Activated CD4-positive, alpha-beta T cell treated with anti-CD3 and anti-CD28 coated beads for 36 hours (primary cell): ENCODE measurements at regions of chr20 and their contacts with region 1.

Region 1: GRCh38 chr20:32387252-32387651 is 29.1 kb downstream of the ASXL1 start:
- DNase-seq: peak; percentile 42
- ATAC-seq: peak; percentile 98
- H3K4me3 Mint-ChIP-seq: no peak overlapping the region
- H3K27ac Mint-ChIP-seq: peak overlapping the region; percentile 67
- H3K4me1 Mint-ChIP-seq: peaks cover 63% of the 10 kb centered on the region
- H3K27me3 Mint-ChIP-seq: no peaks in the 10 kb centered on the region

Region 2: DNA sequence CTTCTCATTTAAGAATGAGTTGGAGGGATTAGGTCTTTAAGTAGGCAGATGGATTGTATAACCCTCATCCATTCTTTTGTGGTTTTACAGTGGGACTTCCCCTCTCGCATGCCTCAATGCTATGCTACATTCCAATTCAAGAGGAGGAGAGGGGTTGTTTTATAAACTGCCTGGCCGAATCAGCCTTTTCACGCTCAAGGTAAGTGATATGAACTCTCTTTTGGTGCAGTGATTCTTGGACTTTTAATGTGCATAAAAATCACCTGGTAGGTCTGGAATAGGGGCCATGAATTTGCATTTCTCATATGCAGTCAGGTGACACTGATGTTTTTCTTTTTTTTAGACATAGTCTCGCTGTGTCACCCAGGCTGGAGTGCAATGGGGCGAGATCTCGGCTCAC is 18.3 kb before region 1 on chr20:
- CTCF ChIA-PET with region 1: interaction called, 4 read pairs
- POLR2A ChIA-PET with region 1: interaction called, 3 read pairs
- intact Hi-C with region 1: loop called in 1 of 2 experiments (anchors 2 kb)
- DNase-seq: no peak
- ATAC-seq: peak; percentile 47
- H3K4me3 Mint-ChIP-seq: no peak overlapping the region
- H3K27ac Mint-ChIP-seq: peak overlapping the region; percentile 43
- H3K4me1 Mint-ChIP-seq: peaks cover 49% of the 10 kb centered on the region
- H3K27me3 Mint-ChIP-seq: no peaks in the 10 kb centered on the region